PC-3 (cell line): ENCODE measurements at regions of chr12 and their contacts with region 1.

Region 1: DNA sequence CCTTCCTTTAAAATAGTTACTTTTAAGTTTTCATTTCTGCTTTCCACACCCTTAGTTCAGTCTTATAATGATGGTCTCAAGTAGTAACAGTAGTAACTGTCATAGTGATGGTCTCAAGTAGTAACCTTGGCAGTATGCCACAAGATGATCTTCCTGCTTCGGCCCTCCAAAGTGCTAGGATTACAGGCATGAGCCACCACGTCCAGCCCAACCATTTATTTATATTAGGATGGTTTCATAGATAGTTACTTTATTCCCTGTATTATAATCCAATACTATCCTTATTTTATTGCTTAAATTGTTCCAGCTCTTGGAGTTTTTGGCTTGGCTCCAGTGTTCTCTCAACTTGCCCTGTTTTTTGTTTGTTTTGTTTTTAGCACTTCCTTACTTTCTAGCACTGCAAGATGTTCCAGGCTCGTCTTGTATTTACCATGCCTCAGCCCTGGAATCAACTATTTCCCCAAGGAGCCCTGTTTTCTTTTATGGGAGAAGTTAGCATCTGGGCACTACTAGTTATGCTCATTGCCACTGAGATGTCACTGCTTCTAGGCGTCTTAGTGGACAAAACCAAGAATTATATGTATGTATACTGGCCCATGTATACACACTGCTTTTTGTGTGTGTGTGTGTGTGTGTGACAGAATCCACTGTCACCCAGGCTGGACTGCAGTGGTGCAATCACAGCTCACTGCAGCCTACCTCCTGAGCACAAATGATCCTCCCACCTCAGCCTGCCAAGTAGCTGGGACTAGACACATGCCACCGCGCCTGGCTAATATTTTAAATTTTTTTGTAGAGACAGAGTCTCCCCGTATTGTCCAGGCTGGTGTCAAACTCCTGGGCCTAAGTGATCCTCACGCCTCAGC is 25.4 kb downstream of the LIMA1 start:
- DNase-seq: peak; percentile 62
- ATAC-seq: peak; percentile 18
- H3K4me3 ChIP-seq: no peak overlapping the region
- H3K27ac ChIP-seq: peak overlapping the region; percentile 60
- H3K4me1 ChIP-seq: peaks cover 82% of the 10 kb centered on the region
- H3K27me3 ChIP-seq: no peaks in the 10 kb centered on the region
- CTCF ChIP-seq: no peak

Region 2: DNA sequence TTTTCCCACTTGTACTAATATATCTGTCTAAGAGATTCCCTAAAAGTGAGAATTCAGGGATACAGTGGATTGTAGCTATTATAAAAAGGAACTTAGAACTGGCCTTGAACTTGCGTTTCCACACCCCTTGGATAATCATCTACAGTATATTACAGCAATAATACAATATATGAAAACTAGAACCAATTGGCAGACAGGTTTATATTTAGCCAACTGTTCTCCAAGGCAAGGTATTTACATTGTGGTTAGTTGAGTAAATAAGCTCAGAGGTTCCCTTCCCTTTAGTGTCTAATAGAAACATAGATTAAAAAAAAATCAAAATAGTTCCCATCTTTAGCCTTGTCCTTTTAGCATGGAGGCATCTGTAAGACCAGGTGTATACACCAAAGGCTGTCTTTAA is 16.7 kb before region 1 on chr12:
- CTCF ChIA-PET with region 1: no interaction called
- POLR2A ChIA-PET with region 1: no interaction called
- intact Hi-C with region 1: loop called (anchors 2 kb)
- DNase-seq: peak; percentile 82
- ATAC-seq: peak; percentile 94
- H3K4me3 ChIP-seq: peak overlapping the region; percentile 40; the same call in 1 of the 2 replicates
- H3K27ac ChIP-seq: peak overlapping the region; percentile 88
- H3K4me1 ChIP-seq: peaks cover 43% of the 10 kb centered on the region
- H3K27me3 ChIP-seq: no peaks in the 10 kb centered on the region
- CTCF ChIP-seq: no peak

Region 3: GRCh38 chr12:50283229-50283923 is 25.5 kb after region 1 on chr12 and contains the start of gene LIMA1:
- CTCF ChIA-PET with region 1: no interaction called
- POLR2A ChIA-PET with region 1: interaction called, 6 read pairs
- intact Hi-C with region 1: loop called (anchors 2 kb)
- DNase-seq: peak; percentile 96
- ATAC-seq: peak; percentile 94
- H3K4me3 ChIP-seq: peak within 1 kb of the TSS; percentile 93
- H3K27ac ChIP-seq: peak within 1 kb of the TSS; percentile 53
- H3K4me1 ChIP-seq: peaks cover 26% of the 10 kb centered on the region
- H3K27me3 ChIP-seq: no peaks in the 10 kb centered on the region
- CTCF ChIP-seq: no peak
- total RNA-seq, gene LIMA1: 45.1 and 58.2 TPM in 2 replicates